ENCODE measurements at regions of chr2 and their contacts with region 1.

Region 1: DNA sequence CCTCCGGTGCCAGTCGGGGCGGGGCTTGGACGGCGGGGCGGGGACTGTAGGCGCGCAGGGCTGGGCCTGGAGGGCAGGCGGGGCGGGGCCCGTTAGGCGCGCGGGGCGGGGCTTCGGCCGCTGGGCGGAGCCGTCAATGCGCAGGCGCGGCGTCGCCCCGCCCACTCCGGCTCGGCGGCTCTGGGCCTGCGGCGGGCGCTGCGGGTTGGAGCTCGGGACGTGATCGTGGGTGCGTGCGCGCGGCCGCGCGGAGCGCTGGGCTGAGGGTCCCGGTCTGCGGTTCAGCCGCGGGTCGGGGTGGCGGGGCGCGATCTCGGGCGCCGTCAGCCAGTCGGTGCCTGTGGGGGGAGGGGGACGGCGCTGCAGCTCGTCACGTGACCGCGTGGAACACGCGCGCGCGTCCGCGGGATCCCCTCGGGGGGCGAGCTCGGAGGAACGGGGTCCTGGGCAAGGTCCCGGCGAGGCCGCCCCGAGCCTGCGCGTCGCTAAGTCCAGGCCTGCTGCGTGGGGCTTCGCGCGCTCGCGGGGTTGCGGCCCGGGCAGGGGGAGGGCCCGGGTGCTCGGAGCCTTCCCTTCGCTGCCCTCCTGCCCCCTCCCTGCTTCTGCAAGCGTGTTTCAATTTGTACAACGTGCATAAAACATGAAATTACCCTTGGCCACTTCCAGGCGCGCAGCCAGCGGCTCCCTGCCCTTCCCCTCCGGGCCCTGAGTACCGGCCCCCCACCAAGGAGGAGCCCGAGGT is at the start of gene D2HGDH:
- DNase-seq: peak; percentile 81 to 98 (median 93)
- ATAC-seq: peak; percentile 85 to 90
- H3K4me3 Mint-ChIP-seq: peak within 1 kb of the TSS; percentile 73 to 88 (median 82)
- H3K27ac Mint-ChIP-seq: peak within 1 kb of the TSS in 9 of 10 donors; percentile 38 to 91 (median 86)
- H3K4me1 Mint-ChIP-seq: peaks cover 10 to 45% (median 28%) of the 10 kb centered on the region in 4 donors
- H3K27me3 Mint-ChIP-seq: no peaks in the 10 kb centered on the region
- polyA plus RNA-seq, gene D2HGDH: 1.5 to 6.8 (median 2.7) TPM

Region 2: DNA sequence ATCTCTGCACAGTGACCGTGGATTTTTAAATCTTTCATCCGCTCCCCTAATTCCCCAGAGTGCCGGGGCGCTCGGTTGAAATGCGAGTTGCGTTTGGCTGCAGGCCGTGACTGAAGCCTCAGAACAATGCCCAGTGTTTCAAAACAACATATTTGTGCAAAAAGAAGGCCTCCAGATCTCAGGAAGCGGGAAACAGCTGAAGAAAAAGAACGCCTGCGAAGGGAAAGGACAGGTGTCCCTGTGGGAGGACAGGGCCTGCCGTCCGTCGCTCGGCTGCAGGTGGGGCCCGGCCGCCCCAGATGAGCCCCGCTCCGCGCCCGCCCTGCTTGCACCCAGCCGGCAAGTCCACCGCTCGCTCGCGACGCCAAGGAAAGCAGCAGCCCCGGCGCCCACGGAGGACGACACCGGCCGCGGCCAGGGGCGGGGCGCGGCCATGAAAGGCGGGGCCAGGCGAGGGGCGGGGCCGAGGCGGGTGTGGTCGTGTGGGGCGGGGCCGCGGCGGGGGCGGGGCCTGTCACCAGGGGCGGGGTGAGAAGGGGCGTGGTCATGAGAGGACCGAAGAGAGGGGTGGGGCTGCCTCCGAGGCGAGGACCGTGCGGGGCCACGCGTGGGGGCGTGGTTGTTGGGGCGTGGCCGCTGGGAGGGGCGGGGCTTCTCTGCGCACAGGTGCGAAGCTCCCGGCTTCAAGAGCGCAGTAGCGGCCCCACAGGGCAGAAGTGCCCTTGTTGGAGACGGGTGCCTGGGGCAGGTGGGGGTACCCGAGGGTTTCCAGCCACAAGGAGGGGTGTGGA is 193.7 kb before region 1 on chr2:
- POLR2A ChIA-PET with region 1: no interaction called
- DNase-seq: peak; percentile 43 to 73 (median 57)
- ATAC-seq: peak; percentile 83 to 85
- H3K4me3 Mint-ChIP-seq: peak overlapping the region; percentile 20 to 77 (median 69)
- H3K27ac Mint-ChIP-seq: peak overlapping the region in 1 of 10 donors; percentile 43
- H3K4me1 Mint-ChIP-seq: peaks cover 0 to 6% (median 2%) of the 10 kb centered on the region in 4 donors
- H3K27me3 Mint-ChIP-seq: peaks cover 8 to 39% (median 23%) of the 10 kb centered on the region in 5 donors

Region 3: DNA sequence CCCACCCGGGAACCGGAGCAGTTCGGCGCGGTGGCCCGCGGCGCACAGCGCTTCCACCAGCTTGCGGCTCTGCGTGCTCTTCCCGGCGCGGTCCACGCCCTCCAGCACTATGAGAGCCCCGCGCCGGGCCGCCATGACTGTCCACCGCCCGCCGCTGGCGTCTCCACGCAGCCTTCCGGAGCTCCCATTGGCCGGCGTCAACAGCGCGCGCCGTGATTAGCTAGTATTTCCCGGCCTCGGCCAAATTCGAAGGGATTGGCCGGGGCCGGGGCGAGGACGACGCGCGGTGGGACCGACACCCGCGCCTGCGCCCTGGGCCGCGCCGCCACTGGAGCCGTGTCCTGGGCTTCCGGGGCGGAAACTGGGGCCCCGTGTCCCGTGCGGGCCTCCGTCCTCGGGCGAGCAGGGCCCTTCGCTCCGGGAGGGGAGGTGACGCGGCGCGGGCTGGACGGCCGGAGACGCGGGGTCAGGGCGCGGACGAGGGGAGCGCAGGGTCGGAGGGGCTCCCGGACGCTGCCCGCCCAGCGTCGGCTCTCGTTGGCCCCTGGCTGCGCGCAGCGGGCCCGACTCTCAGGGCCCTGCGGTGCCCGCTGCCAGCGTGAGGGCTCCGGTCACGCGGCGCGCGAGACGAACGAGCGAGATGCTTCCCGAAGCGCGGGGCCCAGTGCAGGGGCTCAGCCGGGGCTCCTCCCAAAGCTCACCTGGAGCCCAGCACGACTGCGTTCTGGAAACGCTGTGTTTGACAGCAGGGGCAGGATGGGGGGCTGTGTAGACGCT is 47.8 kb before region 1 on chr2 and contains the start of gene DTYMK:
- POLR2A ChIA-PET with region 1: interaction called, 12 read pairs
- DNase-seq: peak; percentile 91 to 98 (median 95)
- ATAC-seq: peak; percentile 93 to 96
- H3K4me3 Mint-ChIP-seq: peak within 1 kb of the TSS; percentile 85 to 96 (median 90)
- H3K27ac Mint-ChIP-seq: peak within 1 kb of the TSS; percentile 75 to 97 (median 88)
- H3K4me1 Mint-ChIP-seq: peaks cover 10 to 34% (median 29%) of the 10 kb centered on the region in 4 donors
- H3K27me3 Mint-ChIP-seq: no peaks in the 10 kb centered on the region
- polyA plus RNA-seq, gene DTYMK: 36.3 to 40.7 (median 38.6) TPM

Region 4: DNA sequence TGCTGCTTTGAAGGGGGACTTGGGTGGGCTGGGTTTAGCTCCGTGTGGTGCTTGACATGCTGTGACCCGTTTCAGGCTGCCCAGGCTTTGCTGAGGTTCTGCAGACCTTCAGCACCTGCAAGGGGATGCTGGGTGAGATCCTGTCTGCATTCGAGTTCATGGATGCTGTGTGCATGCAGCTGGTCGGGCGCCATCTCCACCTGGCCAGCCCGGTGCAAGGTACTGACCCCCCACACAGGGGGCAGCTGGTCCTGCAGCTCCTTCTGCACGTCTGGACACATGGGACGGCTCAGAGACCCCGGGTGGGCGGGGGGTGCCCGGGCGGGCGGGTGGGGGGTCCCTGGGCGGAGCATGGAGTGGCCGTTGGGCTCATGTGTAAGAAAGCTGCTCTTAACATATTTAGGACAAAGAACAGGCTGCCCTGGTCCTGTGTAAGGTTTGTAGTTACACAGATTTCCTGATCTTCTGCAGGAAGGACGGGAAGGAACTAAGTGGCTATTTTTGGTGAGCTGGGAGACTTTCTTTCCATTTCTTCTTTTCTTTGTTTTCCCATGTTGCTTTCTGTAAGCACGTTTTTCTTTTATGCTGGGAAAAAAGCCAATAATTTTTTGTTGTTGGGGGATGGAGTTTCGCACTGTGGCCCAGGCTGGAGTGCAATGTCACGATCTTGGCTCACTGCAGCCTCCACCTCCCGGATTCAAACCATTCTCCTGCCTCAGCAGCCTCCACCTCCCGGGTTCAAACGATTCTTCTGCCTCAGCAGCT is 15.6 kb after region 1 on chr2:
- POLR2A ChIA-PET with region 1: no interaction called
- DNase-seq: no peak
- ATAC-seq: no peak
- H3K4me3 Mint-ChIP-seq: no peak overlapping the region
- H3K27ac Mint-ChIP-seq: peak overlapping the region in 1 of 10 donors; percentile 87
- H3K4me1 Mint-ChIP-seq: peaks cover 0 to 2% (median under 1%) of the 10 kb centered on the region in 4 donors
- H3K27me3 Mint-ChIP-seq: no peaks in the 10 kb centered on the region

Region 5: GRCh38 chr2:241820625-241821384 is 86.2 kb after region 1 on chr2:
- POLR2A ChIA-PET with region 1: no interaction called
- DNase-seq: no peak
- ATAC-seq: no peak
- H3K4me3 Mint-ChIP-seq: peak overlapping the region in 3 of 10 donors; percentile 51 to 67 (median 57)
- H3K27ac Mint-ChIP-seq: peak overlapping the region in 1 of 10 donors; percentile 69
- H3K4me1 Mint-ChIP-seq: peaks cover 10 to 37% (median 12%) of the 10 kb centered on the region in 4 donors
- H3K27me3 Mint-ChIP-seq: peaks cover 0 to 21% (median 0%) of the 10 kb centered on the region in 5 donors

Region 6: DNA sequence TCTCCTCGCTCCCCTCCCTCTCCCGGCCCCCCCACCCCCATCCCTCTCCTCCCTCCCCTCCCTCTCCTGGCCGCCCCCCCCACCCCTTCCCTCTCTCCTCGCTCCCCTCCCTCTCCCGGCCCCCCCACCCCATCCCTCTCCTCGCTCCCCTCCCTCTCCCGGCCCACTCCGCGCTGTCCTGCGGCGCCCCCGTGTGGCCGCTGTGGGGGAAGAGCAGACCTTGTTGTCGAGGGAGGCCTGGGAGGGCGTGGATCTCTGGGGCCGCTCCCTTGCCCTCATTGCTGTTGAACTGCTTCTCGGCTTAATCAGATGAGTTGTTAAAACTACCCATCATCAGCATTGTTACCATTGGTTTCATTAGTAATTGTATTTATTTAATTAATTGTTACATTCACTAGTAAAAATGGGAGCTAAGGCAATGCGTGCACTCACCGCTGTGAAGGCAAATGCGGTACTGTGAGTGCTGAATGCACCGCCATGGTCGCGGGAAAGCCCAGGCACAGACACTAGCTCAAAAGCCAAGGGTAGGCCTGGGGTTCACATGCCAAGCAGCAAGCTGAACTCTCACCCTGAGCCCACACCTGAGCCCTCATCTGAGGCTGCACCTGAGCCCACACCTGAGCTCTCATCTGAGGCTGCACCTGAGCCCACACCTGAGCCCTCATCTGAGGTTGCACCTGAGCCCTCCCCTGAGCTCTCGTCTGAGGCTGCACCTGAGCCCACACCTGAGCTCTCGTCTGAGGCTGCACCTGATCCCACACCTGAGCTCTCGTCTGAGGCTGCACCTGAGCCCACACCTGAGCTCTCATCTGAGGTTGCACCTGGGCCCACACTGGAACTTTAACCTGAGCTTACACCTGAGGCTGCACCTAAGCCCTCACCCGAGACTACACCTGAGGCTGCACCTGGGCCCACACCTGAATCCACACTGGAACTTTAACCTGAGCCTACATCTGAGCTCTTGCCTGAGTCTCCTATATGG is 143.6 kb after region 1 on chr2:
- POLR2A ChIA-PET with region 1: interaction called, 11 read pairs
- DNase-seq: peak; percentile 52 to 86 (median 72)
- ATAC-seq: peak in 1 of 2 donors; percentile 16
- H3K4me3 Mint-ChIP-seq: no peak overlapping the region
- H3K27ac Mint-ChIP-seq: peak overlapping the region in 2 of 10 donors; percentile 31 to 62
- H3K4me1 Mint-ChIP-seq: peaks cover 17 to 31% (median 26%) of the 10 kb centered on the region in 4 donors
- H3K27me3 Mint-ChIP-seq: peaks cover 0 to 4% (median 0%) of the 10 kb centered on the region in 5 donors

Measured in naive thymus-derived CD8-positive, alpha-beta T cell (primary cell).